ENCODE measurements at regions of chr1 and their contacts with region 1.

Region 1: DNA sequence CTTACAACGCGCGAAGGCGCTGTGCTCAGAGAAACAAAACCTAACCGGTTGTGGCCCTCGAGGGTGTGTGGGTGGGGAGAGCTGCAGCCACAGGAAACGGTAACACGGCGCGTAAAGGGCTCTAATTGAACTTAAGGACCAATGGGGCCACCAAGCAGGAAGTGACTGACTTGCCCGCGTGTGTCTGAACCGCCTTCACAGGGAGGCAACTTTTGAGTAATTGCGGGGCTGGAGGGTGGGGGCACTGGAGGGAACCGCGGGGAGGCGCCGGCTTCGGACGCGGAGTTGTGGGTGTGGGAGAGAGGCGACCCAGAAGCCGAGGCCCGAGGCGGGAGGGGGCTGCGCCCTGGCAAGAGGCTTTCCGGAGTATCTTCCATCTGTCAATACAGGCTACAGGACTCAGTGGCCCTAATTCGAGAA is 577 bp upstream of the PNRC2 start:
- DNase-seq: peak; percentile 76

Region 2: GRCh38 chr1:23691499-23692307 is 267.3 kb before region 1 on chr1 and contains the start of gene RPL11:
- CTCF ChIA-PET with region 1: no interaction called
- POLR2A ChIA-PET with region 1: no interaction called
- DNase-seq: peak; percentile 94

Region 3: DNA sequence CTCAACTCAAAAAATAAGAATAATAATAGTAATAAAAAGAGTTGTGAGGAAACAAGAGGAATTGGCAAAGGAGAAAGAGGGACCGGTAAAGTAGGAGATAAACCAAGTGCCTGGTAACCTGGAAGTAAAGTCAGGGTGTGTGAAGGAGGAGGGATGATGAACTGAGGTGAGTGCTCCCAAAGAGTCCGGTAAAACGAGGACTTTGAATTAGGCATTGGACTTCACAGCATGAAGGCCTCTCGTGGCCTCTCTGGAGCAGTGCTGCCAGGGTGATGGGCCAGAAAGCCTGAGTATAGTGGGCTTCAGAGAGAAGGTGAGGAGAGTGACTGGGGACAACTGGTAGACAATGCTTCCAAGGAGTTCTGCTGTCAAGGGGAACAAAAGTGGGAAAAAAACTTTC is 249.8 kb before region 1 on chr1:
- CTCF ChIA-PET with region 1: no interaction called
- POLR2A ChIA-PET with region 1: no interaction called
- DNase-seq: no peak

Region 4: GRCh38 chr1:23772049-23772853 is 186.8 kb before region 1 on chr1:
- CTCF ChIA-PET with region 1: no interaction called
- POLR2A ChIA-PET with region 1: no interaction called
- DNase-seq: peak; percentile 83

Region 5: DNA sequence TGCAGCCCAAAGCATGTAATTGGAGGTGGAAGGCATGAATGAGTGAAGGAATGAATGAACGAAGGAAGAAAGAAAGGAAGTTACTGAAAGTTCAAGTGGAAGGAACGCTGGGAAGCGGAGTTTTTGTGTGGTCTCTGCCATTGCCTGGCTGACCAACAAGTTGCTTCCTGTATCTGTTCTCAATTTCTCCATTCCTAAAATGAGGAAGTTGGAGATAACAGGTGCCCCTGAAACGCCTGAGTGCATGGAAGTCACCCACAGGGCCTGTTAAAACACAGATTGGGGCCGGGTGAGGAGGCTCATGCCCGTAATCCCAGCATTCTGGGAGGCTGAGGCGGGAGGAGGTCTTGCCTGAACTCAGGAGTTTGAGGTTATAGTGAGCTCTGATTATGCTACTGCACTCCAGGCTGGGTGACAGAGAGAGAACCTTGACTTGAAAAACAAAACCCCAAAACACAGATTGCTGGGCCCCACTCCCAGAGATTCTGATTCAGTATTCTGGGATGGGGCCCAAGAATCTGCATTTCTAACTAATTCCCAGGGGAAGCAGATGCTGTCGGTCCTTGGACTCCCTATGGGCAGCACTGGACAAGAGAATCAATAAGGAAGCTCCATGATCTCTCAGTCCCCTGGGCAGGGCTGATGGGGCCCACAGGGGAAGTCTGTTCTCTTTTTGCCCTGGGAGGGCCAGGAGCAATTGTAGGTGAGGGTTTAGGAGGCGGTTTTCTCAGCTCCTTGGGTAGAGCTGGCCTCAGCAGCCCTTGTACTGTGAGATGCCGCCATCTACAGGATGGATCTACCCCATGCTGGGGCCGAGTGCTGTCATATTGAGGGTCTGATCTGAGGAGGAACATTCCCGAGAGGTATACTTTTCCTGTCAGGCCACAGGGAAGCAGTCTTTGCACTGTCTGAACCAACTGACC is 42.6 kb before region 1 on chr1:
- CTCF ChIA-PET with region 1: no interaction called
- POLR2A ChIA-PET with region 1: no interaction called
- DNase-seq: peak; percentile 83

Region 6: DNA sequence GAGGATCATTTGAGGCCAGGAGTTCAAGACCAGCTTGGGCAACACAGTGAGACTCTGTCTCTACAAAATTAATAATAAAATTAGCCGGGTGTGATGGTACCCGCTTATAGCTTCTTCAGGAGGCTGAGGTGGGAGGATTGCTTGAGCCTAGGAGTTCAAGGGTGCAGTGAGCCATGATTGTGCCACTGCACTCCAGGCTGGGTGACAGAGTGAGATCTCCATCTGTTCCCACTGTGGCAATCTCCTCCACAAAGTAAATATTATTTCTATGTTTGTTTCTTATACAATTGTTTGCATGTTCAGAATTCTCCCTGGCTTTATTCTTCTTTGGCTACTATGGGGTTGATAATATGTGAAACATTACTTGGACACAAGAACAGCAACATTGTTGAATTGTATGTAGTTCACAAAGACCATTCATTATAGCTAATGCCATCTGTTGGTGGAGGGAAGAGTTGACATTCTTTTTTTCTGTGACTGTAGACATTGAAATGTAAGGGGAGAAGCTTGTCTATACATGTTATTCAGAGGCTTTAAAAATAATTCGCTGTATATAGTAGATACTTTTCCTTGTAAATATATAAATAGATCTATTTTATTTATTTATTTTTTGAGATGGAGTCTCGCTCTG is 68.9 kb after region 1 on chr1:
- CTCF ChIA-PET with region 1: interaction called, 3 read pairs
- POLR2A ChIA-PET with region 1: interaction called, 10 read pairs
- DNase-seq: no peak

Measured in HEK293T (cell line).